ENCODE measurements at regions of chr2 and their contacts with region 1.

Region 1: GRCh38 chr2:181742922-181743722 is 62.8 kb upstream of the NEUROD1 start:
- DNase-seq: peak; percentile 83
- H3K4me3 ChIP-seq: no peak overlapping the region
- H3K27ac ChIP-seq: peak overlapping the region; percentile 34
- H3K4me1 ChIP-seq: peaks cover 15% of the 10 kb centered on the region
- H3K27me3 ChIP-seq: no peaks in the 10 kb centered on the region
- CTCF ChIP-seq: peak; percentile 37 to 39
- POLR2A ChIP-seq: no peak

Region 2: DNA sequence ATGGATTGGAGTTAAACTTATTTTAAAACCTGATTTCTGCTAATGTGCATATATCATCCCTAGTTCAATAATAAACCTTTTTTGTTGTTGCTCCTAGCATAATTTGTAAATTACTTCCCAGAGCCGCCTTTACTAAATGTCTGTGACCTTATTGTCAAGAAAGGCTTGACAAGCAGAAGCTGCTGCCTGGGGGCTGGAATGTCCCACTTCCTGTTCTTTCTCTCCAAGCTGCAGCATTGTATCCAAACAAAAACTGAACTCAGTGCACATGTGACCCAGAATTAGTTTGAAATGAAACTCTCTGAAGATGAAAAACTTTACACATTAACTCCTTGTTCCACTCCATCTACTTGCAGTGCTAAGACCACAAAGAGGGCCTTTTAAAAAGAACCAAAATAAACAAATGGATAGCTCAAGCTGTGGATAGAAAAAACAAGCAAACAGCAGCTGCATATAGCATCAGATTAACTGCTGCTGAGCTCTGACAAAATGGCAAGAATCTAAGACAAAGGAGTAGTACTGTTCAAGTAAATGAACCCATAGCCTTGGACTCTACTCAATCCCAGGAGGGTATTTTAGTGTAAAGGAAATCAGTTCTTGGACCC is 37.0 kb after region 1 on chr2:
- CTCF ChIA-PET with region 1: interaction called, 17 read pairs
- POLR2A ChIA-PET with region 1: no interaction called
- dilution Hi-C with region 1: no loop called
- intact Hi-C with region 1: loop called (anchors 2 kb)
- DNase-seq: peak; percentile 57
- H3K4me3 ChIP-seq: no peak overlapping the region
- H3K27ac ChIP-seq: peak overlapping the region; percentile 13
- H3K4me1 ChIP-seq: peaks cover 54% of the 10 kb centered on the region
- H3K27me3 ChIP-seq: no peaks in the 10 kb centered on the region
- CTCF ChIP-seq: no peak
- POLR2A ChIP-seq: no peak

Region 3: GRCh38 chr2:181810823-181811695 is 67.9 kb after region 1 on chr2:
- CTCF ChIA-PET with region 1: interaction called, 14 read pairs
- POLR2A ChIA-PET with region 1: no interaction called
- dilution Hi-C with region 1: no loop called
- intact Hi-C with region 1: loop called (anchors 1 kb)
- DNase-seq: peak; percentile 99
- H3K4me3 ChIP-seq: peak overlapping the region in 1 of 3 experiments; percentile 18
- H3K27ac ChIP-seq: peak overlapping the region; percentile 93
- H3K4me1 ChIP-seq: peaks cover 61% of the 10 kb centered on the region
- H3K27me3 ChIP-seq: no peaks in the 10 kb centered on the region
- CTCF ChIP-seq: no peak
- POLR2A ChIP-seq: peak; percentile 61

Region 4: GRCh38 chr2:181916726-181917718 is 173.9 kb after region 1 on chr2:
- CTCF ChIA-PET with region 1: interaction called, 18 read pairs
- POLR2A ChIA-PET with region 1: interaction called, 3 read pairs
- dilution Hi-C with region 1: no loop called
- intact Hi-C with region 1: no loop called
- DNase-seq: peak; percentile 79
- H3K4me3 ChIP-seq: no peak overlapping the region
- H3K27ac ChIP-seq: peak overlapping the region; percentile 14
- H3K4me1 ChIP-seq: peaks cover 38% of the 10 kb centered on the region
- H3K27me3 ChIP-seq: no peaks in the 10 kb centered on the region
- CTCF ChIP-seq: no peak
- POLR2A ChIP-seq: no peak

Region 5: DNA sequence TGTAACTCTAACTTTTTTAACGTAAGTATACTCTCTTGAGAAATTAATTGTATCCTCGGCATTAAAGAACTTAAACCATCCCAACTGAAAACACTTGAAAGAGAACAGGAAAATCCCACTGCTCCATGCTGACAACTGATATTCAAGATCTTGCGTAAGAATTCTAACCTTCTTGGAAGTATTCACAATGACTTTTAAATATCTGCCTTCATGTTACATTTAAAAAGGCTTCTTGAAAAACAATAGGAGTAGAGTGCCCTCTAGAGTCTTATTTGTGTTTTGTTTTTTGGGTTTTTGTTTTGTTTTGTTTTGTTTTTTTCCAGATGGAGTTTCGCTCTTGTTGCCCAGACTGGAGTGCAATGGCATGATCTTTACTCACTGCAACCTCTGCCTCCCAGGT is 907.6 kb after region 1 on chr2:
- CTCF ChIA-PET with region 1: interaction called, 4 read pairs
- POLR2A ChIA-PET with region 1: no interaction called
- dilution Hi-C with region 1: no loop called
- intact Hi-C with region 1: loop called (anchors 2 kb)
- DNase-seq: peak; percentile 67
- H3K4me3 ChIP-seq: no peak overlapping the region
- H3K27ac ChIP-seq: no peak overlapping the region
- H3K4me1 ChIP-seq: no peaks in the 10 kb centered on the region
- H3K27me3 ChIP-seq: no peaks in the 10 kb centered on the region
- CTCF ChIP-seq: peak; percentile 15 to 30
- POLR2A ChIP-seq: no peak